Activated naive CD4-positive, alpha-beta T cell treated with anti-CD3 and anti-CD28 coated beads for 36 hours (primary cell): ENCODE measurements at regions of chr17 and their contacts with region 1.

Region 1: DNA sequence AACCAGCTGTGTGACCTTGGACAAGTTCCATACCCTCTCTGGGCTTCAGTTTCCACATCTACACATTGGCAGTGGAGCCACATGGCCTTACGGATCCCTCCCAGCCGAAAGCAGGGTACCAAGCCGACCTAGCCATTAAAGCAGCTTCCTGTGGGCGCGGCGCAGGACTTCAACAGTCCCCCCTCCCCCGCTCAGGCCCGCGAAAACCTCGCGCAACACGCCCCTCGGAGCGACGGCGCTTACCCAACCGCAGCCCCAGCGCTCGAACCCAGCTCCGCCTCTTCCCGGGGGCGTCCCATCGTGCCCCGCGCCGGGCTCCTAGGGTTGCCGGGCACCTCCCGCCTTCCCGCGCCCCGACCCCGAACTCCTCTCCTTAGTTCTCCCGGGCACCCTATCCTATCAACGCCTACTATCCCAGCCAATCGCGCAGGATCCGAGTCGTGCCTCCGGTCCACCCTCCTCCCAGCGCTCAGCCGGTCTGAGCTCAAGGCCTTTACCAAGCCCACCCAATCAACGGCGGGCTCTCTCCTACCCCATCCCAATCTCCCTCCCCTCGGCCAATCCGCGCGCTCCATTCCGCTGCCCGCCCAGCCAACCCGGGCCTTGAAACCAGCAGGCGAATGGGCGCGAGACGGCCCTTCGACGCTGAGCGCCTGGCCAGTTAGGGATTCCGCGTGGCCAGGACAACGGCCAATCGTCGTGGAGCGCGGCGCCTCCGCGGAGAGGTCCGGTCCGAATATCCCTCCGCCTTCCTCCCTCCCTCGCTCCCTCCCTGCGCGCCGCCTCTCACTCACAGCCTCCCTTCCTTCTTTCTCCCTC is at the start of gene KPNB1:
- DNase-seq: peak; percentile 100
- H3K4me3 Mint-ChIP-seq: peak within 1 kb of the TSS; percentile 97
- H3K27ac Mint-ChIP-seq: peak within 1 kb of the TSS; percentile 98
- H3K4me1 Mint-ChIP-seq: peaks cover 53% of the 10 kb centered on the region
- H3K27me3 Mint-ChIP-seq: no peaks in the 10 kb centered on the region
- total RNA-seq, gene KPNB1: 602 to 614 TPM

Region 2: GRCh38 chr17:47323382-47324222 is 325.8 kb before region 1 on chr17 and contains the start of gene EFCAB13:
- CTCF ChIA-PET with region 1: no interaction called
- intact Hi-C with region 1: loop called (anchors 1 kb)
- DNase-seq: peak; percentile 79
- H3K4me3 Mint-ChIP-seq: peak within 1 kb of the TSS; percentile 98
- H3K27ac Mint-ChIP-seq: peak within 1 kb of the TSS; percentile 88
- H3K4me1 Mint-ChIP-seq: peaks cover 7% of the 10 kb centered on the region
- H3K27me3 Mint-ChIP-seq: peaks cover 2% of the 10 kb centered on the region
- total RNA-seq, gene EFCAB13: 7.0 to 7.1 TPM

Region 3: GRCh38 chr17:47663912-47664625 is 14.7 kb after region 1 on chr17:
- CTCF ChIA-PET with region 1: interaction called, 45 read pairs
- intact Hi-C with region 1: loop called (anchors 1 kb)
- DNase-seq: peak; percentile 80
- H3K4me3 Mint-ChIP-seq: no peak overlapping the region
- H3K27ac Mint-ChIP-seq: peak overlapping the region; percentile 87
- H3K4me1 Mint-ChIP-seq: peaks cover 41% of the 10 kb centered on the region
- H3K27me3 Mint-ChIP-seq: no peaks in the 10 kb centered on the region

Region 4: GRCh38 chr17:47707056-47707804 is 57.9 kb after region 1 on chr17:
- CTCF ChIA-PET with region 1: no interaction called
- intact Hi-C with region 1: loop called (anchors 1 kb)
- DNase-seq: peak; percentile 5
- H3K4me3 Mint-ChIP-seq: no peak overlapping the region
- H3K27ac Mint-ChIP-seq: peak overlapping the region; percentile 98
- H3K4me1 Mint-ChIP-seq: peaks cover 69% of the 10 kb centered on the region
- H3K27me3 Mint-ChIP-seq: no peaks in the 10 kb centered on the region

Region 5: GRCh38 chr17:47733047-47733673 is 83.8 kb after region 1 on chr17 and contains the start of gene TBX21:
- CTCF ChIA-PET with region 1: interaction called, 3 read pairs
- intact Hi-C with region 1: loop called (anchors 1 kb)
- DNase-seq: peak; percentile 92
- H3K4me3 Mint-ChIP-seq: peak within 1 kb of the TSS; percentile 100
- H3K27ac Mint-ChIP-seq: peak within 1 kb of the TSS; percentile 99
- H3K4me1 Mint-ChIP-seq: peaks cover 70% of the 10 kb centered on the region
- H3K27me3 Mint-ChIP-seq: no peaks in the 10 kb centered on the region
- total RNA-seq, gene TBX21: 50.6 to 52.3 TPM

Region 6: GRCh38 chr17:47970704-47971463 is 321.5 kb after region 1 on chr17 and contains the start of gene CDK5RAP3:
- CTCF ChIA-PET with region 1: no interaction called
- intact Hi-C with region 1: loop called (anchors 1 kb)
- DNase-seq: peak; percentile 100
- H3K4me3 Mint-ChIP-seq: peak within 1 kb of the TSS; percentile 95
- H3K27ac Mint-ChIP-seq: peak within 1 kb of the TSS; percentile 80
- H3K4me1 Mint-ChIP-seq: peaks cover 24% of the 10 kb centered on the region
- H3K27me3 Mint-ChIP-seq: no peaks in the 10 kb centered on the region
- total RNA-seq, gene CDK5RAP3: 174 to 175 TPM